OCI-LY7 (cell line): ENCODE measurements at regions of chr13 and their contacts with region 1.

Region 1: DNA sequence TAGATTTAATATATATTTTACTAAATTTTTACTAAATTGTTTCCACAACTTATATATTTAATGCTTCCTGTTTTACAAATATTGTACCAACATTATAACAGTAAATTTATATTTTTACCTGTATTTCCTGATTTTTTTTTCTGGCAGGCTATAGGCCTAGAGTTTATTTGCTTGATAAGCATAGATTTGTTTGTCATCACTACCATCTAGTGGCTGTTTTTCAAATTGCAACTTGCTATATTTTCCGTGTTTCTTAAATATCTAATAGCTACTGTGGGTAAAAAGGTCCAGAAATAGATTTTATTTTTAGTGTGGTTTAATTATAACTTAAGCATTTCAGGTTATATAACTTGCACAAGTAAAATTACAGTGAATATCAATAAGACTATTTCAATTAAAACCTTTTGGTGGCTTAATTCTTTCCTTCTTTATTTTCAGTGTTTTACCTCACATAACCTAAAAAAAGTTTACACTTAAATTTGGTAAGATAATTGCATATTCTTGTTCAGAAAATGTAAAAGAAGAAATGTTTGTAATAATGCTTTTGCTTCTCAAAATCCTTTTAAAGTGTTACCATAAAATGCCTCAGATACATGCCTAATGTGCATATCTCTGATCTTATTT is 60.6 kb downstream of the NDFIP2 start:
- DNase-seq: peak; percentile 61
- H3K4me3 ChIP-seq: no peak overlapping the region
- H3K27ac ChIP-seq: no peak overlapping the region
- H3K4me1 ChIP-seq: no peaks in the 10 kb centered on the region
- CTCF ChIP-seq: peak; percentile 95

Region 2: DNA sequence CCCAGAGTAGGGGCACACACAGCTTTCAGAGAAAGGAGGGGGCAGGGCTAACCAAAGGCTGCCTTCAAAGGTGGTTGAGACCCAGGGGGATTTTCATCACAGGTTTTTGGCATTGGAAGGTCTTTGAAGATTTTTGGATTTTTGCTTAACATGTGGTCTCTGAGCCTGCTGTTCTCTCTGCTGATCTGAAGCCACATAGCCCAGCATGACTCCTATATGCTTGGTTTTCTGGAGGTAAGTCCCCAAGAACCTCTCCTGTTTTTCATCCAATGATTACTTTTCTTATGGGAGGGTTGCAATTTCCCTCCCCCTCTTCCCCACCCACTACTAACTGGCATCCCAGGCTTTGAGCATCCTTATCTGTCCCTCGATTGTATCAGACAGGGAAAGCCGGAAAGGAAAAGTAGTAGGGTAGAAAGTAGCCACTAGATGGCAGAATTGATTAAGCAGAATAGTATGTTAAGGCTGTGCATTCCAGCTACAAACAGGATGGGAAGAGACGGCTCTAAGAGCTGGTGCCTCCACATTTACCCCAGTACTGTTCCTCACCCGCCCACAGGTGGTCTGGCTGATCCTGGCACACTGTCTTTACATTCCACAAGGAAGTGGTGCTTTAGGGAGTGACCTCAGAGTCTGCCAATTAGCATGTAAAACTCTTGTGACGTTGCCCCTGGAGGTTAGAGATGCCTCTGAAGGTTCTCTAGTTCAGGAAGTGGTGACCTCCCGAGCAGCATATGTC is 1404.0 kb before region 1 on chr13:
- CTCF ChIA-PET with region 1: no interaction called
- POLR2A ChIA-PET with region 1: interaction called, 3 read pairs
- intact Hi-C with region 1: loop called (anchors 10 kb)
- DNase-seq: peak; percentile 51
- H3K4me3 ChIP-seq: no peak overlapping the region
- H3K27ac ChIP-seq: no peak overlapping the region
- H3K4me1 ChIP-seq: no peaks in the 10 kb centered on the region
- CTCF ChIP-seq: peak; percentile 86

Region 3: GRCh38 chr13:79194727-79195126 is 346.8 kb before region 1 on chr13:
- CTCF ChIA-PET with region 1: no interaction called
- POLR2A ChIA-PET with region 1: no interaction called
- intact Hi-C with region 1: no loop called
- DNase-seq: peak; percentile 29
- H3K4me3 ChIP-seq: peak overlapping the region; percentile 54
- H3K27ac ChIP-seq: peak overlapping the region; percentile 63
- H3K4me1 ChIP-seq: peaks cover 57% of the 10 kb centered on the region
- CTCF ChIP-seq: no peak

Region 4: GRCh38 chr13:79311386-79311785 is 230.2 kb before region 1 on chr13:
- CTCF ChIA-PET with region 1: no interaction called
- POLR2A ChIA-PET with region 1: no interaction called
- intact Hi-C with region 1: loop called (anchors 10 kb)
- DNase-seq: no peak
- H3K4me3 ChIP-seq: no peak overlapping the region
- H3K27ac ChIP-seq: no peak overlapping the region
- H3K4me1 ChIP-seq: no peaks in the 10 kb centered on the region
- CTCF ChIP-seq: no peak

Region 5: GRCh38 chr13:79328510-79328909 is 213.0 kb before region 1 on chr13:
- CTCF ChIA-PET with region 1: no interaction called
- POLR2A ChIA-PET with region 1: no interaction called
- intact Hi-C with region 1: no loop called
- DNase-seq: no peak
- H3K4me3 ChIP-seq: no peak overlapping the region
- H3K27ac ChIP-seq: no peak overlapping the region
- H3K4me1 ChIP-seq: no peaks in the 10 kb centered on the region
- CTCF ChIP-seq: no peak

Region 6: GRCh38 chr13:79423801-79424642 is 117.5 kb before region 1 on chr13:
- CTCF ChIA-PET with region 1: interaction called, 4 read pairs
- POLR2A ChIA-PET with region 1: interaction called, 8 read pairs
- intact Hi-C with region 1: loop called (anchors 1 kb)
- DNase-seq: peak; percentile 54
- H3K4me3 ChIP-seq: no peak overlapping the region
- H3K27ac ChIP-seq: no peak overlapping the region
- H3K4me1 ChIP-seq: no peaks in the 10 kb centered on the region
- CTCF ChIP-seq: peak; percentile 89

Region 7: DNA sequence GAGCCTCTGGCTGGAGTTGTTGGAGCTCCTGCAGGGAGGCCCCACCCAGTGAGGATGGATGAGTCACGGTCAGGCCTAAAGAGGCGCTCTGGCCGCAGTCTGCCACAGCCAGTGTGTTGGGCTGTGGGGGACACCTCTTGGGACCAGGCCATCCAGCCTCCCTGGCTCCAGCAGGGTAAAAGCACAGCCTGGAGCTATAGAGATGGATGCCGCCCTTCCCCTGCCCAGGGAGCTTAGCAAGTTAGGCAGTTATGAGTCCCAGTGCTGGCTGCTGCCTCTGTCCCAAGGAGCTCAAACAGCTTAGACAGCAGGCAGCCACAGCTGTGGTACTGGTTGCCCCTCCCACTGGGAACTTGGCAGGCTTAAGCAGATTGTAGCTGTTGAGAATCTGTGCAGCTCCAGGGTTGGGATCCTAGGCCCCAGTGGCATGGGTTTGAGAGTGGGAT is 40.4 kb after region 1 on chr13:
- CTCF ChIA-PET with region 1: no interaction called
- POLR2A ChIA-PET with region 1: no interaction called
- intact Hi-C with region 1: no loop called
- DNase-seq: no peak
- H3K4me3 ChIP-seq: no peak overlapping the region
- H3K27ac ChIP-seq: no peak overlapping the region
- H3K4me1 ChIP-seq: no peaks in the 10 kb centered on the region
- CTCF ChIP-seq: no peak